Mammary epithelial cell (primary cell): ENCODE measurements at regions of chr18 and their contacts with region 1.

Region 1: GRCh38 chr18:78056011-78056410 is 806.4 kb downstream of the GALR1 start:
- DNase-seq: no peak
- H3K4me3 ChIP-seq: no peak overlapping the region
- H3K27ac ChIP-seq: no peak overlapping the region
- H3K4me1 ChIP-seq: no peaks in the 10 kb centered on the region
- H3K27me3 ChIP-seq: no peaks in the 10 kb centered on the region
- CTCF ChIP-seq: no peak

Region 2: DNA sequence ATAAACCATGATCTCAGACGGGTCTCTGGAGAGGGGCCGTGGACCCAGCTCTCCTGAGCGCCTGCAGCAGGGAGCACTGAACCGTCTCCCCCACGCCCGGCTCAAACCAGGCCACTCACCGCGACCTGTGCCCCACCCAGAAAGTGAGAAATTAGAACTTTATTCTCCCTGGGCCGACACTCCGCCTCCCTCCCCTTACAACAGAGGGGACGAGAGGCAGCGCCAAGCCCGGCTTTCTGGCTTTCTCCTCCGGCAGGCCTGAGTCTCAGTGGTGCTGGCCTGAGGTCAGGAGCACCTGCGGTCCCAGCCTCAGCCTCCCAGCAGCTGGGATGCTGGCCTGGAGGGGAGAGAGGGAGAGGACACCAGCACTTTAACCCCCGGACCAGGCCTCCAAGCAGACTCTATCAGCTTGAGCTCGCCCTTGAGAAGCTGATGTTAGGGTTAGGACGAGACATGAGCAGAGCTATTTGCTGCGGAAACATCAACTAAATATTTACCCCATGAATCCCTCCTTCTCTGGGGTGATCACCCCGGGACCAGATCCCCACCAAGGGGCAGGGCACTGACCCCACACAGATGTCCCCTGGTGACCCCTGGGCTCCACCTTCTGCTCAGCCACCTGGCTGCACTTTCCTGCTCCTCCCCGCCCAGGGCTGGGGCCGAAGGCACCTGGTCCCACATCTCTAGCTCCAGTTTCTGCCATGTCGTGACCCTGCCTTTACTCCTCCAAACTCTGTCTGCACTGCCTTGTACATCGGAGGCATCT is 67.3 kb after region 1 on chr18:
- CTCF ChIA-PET with region 1: no interaction called
- dilution Hi-C with region 1: loop called (anchors 5 kb)
- in situ Hi-C with region 1: no loop called
- intact Hi-C with region 1: no loop called
- DNase-seq: no peak
- H3K4me3 ChIP-seq: no peak overlapping the region
- H3K27ac ChIP-seq: no peak overlapping the region
- H3K4me1 ChIP-seq: no peaks in the 10 kb centered on the region
- H3K27me3 ChIP-seq: no peaks in the 10 kb centered on the region
- CTCF ChIP-seq: no peak